GM12878 (cell line): ENCODE measurements at regions of chr17 and their contacts with region 1.

Region 1: DNA sequence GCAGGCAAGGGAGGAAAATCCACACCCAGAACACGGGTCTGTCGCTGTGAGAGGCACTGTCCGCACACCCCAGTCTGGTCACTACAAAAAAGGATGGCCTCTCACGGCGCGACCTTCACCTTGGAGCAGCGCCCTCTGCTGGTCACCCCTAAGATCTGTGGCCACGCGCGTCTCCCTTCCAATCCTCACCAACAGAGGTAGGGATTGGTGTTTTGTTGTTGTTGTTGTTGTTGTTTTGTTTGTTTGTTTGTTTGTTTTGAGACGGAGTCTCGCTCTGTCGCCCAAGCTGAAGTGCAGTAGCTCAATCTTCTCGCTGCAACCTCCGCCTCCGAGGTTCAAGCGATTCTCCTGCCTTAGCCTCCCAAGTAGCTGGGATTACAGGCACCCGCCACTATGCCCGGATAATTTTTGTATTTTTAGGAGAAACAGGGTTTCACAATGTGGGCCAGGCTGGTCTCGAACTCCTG is 15.0 kb upstream of the C17orf58 start:
- DNase-seq: no peak
- ATAC-seq: peak; percentile 98
- H3K4me3 ChIP-seq: peak overlapping the region; percentile 28; the same call in 1 of the 2 replicates
- H3K27ac ChIP-seq: no peak overlapping the region
- H3K4me1 ChIP-seq: no peaks in the 10 kb centered on the region
- H3K27me3 ChIP-seq: peaks cover 0 to 2% of the 10 kb centered on the region in 2 experiments; a peak in 1 of 4 replicates
- CTCF ChIP-seq: peak; percentile 59 to 83 (median 80)
- EP300 ChIP-seq: no peak
- POLR2A ChIP-seq: no peak
- RAD21 ChIP-seq: peak; percentile 37; the same call in 1 of the 2 replicates

Region 2: GRCh38 chr17:67993596-67994361 is 17.5 kb before region 1 on chr17:
- CTCF ChIA-PET with region 1: interaction called, 17 read pairs
- POLR2A ChIA-PET with region 1: no interaction called
- RAD21 ChIA-PET with region 1: interaction called, 3 read pairs
- SMC1A ChIA-PET with region 1: interaction called, 3 read pairs
- in situ Hi-C with region 1: no loop called
- intact Hi-C with region 1: no loop called
- DNase-seq: no peak
- ATAC-seq: peak; percentile 80
- H3K4me3 ChIP-seq: peak overlapping the region; percentile 77
- H3K27ac ChIP-seq: peak overlapping the region; percentile 48
- H3K4me1 ChIP-seq: peaks cover 7% of the 10 kb centered on the region
- H3K27me3 ChIP-seq: peaks cover 0 to 3% of the 10 kb centered on the region in 2 experiments; a peak in 2 of 4 replicates
- CTCF ChIP-seq: no peak
- EP300 ChIP-seq: no peak
- POLR2A ChIP-seq: peak; percentile 76
- RAD21 ChIP-seq: no peak

Region 3: GRCh38 chr17:68054296-68054900 is 43.2 kb after region 1 on chr17:
- CTCF ChIA-PET with region 1: no interaction called
- POLR2A ChIA-PET with region 1: no interaction called
- RAD21 ChIA-PET with region 1: no interaction called
- SMC1A ChIA-PET with region 1: no interaction called
- in situ Hi-C with region 1: no loop called
- intact Hi-C with region 1: no loop called
- DNase-seq: no peak
- ATAC-seq: no peak
- H3K4me3 ChIP-seq: no peak overlapping the region
- H3K27ac ChIP-seq: no peak overlapping the region
- H3K4me1 ChIP-seq: no peaks in the 10 kb centered on the region
- H3K27me3 ChIP-seq: no peaks in the 10 kb centered on the region
- CTCF ChIP-seq: no peak
- EP300 ChIP-seq: no peak
- POLR2A ChIP-seq: no peak
- RAD21 ChIP-seq: no peak

Region 4: DNA sequence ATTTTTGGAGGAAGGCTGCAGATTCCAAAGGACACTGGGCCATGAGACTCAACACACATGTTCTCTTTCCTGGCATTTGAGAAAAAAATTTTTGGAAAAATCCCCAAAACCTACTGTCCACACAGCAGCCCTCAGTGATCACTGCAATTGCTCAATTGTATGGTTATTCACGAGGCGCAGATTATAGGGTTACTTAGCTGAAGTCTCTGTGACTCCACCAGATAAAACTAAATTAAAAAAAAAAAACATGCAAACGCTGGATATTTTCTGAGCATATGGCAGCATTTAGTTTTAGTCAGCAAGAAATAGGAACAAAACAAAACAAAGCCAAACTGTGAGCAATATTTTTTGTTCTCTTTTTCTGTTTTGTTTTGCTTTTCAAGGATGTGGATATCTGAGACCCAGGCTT is 673.7 kb after region 1 on chr17:
- CTCF ChIA-PET with region 1: no interaction called
- POLR2A ChIA-PET with region 1: no interaction called
- RAD21 ChIA-PET with region 1: no interaction called
- SMC1A ChIA-PET with region 1: no interaction called
- in situ Hi-C with region 1: no loop called
- intact Hi-C with region 1: no loop called
- DNase-seq: no peak
- ATAC-seq: no peak
- H3K4me3 ChIP-seq: no peak overlapping the region
- H3K27ac ChIP-seq: no peak overlapping the region
- H3K4me1 ChIP-seq: no peaks in the 10 kb centered on the region
- H3K27me3 ChIP-seq: no peaks in the 10 kb centered on the region
- CTCF ChIP-seq: no peak
- EP300 ChIP-seq: no peak
- POLR2A ChIP-seq: no peak
- RAD21 ChIP-seq: no peak